Heart right ventricle (tissue), 16 donors: ENCODE measurements at regions of chrX and their contacts with region 1.

Region 1: DNA sequence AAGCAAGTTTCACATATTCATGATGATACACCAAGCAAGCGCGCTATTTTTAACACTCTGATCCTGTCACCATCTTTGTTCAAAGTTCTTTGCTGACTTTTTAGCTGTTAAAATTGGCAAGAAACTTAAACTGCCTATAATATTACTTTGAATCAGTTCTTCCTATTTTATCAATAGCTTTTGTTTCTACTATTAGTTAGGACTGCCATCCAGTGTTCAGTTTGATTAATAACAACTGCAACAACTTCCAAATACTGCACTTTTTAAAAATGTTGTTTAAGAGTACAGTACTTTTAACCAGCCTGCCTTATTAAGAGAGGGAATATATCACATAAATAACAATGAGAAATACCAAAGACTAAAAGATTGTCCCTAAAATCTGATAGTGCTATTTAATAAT is 614.3 kb downstream of the FAM133A start:
- DNase-seq: no peak
- ATAC-seq: no peak
- H3K4me3 ChIP-seq: no peak overlapping the region
- H3K27ac ChIP-seq: no peak overlapping the region
- H3K4me1 ChIP-seq: no peaks in the 10 kb centered on the region
- H3K27me3 ChIP-seq: no peaks in the 10 kb centered on the region
- CTCF ChIP-seq: no peak

Region 2: DNA sequence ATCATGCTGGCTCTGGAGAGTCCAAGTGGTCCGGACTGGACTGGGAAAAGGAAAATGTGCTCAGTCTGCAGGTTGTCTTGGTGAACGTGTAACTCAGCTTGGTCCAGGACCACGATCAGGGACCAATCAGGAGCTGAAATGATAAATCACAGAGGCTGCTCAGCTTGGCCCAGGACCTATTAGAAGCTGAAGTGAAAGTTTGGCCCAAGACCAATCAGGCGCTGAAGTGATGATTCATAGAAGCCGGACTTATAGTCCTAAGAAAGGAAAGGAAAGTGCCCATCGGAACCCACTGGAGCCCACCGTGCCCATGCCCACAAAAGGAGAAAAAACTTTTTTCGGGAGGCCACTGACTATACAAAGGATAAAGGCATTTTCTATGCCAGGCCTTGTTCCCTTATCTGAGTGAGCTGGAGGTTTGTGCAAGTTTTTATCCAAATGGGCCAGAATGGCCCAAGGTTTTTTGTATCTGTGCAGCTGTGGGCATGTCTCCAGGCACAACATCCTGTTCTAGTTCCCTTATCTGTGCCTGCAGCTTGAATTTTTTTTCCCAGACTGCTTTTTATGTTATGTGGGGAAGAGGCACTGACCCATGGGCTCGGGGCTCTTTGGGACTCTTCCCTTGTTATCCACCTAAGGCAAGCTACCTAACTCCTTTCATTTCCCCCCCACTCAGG is 419.9 kb before region 1 on chrX:
- intact Hi-C with region 1: loop called in 1 of 10 experiments (anchors 5 kb)
- DNase-seq: no peak
- ATAC-seq: no peak
- H3K4me3 ChIP-seq: no peak overlapping the region
- H3K27ac ChIP-seq: no peak overlapping the region
- H3K4me1 ChIP-seq: no peaks in the 10 kb centered on the region
- H3K27me3 ChIP-seq: peaks cover 0 to 31% (median 0%) of the 10 kb centered on the region in 7 donors
- CTCF ChIP-seq: no peak